ENCODE measurements at regions of chr6 and their contacts with region 1.

Region 1: DNA sequence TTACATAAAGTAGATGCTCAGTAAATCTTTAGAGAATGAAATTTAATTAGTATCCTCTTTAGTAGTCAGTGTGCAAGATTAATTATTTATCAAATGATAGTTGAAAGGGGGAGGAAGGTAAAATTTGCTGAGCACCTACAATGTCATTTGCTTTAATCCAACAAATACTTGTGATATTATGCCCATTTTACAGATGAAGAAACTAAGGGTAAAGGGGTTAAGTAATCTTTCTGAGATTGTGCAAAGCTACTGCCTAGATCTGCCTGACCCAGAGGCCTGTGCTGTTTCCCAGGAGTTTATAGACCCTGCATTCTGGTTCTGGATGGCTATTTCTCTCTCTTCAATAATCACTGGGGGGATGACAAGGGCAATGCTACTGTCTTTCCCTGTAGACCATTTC is 58.3 kb upstream of the BACH2 start:
- DNase-seq: no peak

Region 2: DNA sequence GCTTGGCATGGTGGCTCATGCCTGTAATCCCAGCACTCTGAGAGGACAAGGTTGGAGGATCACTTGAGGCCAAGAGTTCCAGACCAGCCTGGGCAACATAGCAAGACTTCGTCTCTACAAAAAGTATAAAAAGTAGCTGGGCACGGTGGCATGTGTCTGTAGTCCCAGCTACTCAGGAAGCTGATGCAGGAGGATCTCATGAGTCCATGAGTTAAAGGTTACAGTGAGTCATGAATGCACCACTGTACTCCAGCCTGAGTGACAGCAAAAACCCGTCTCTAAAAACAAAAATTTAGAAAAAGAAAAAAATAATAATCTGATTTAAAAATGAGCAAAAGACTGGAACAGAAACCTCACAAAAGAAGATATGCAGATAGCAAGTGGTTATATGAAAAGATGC is 1671.2 kb before region 1 on chr6:
- intact Hi-C with region 1: no loop called
- DNase-seq: no peak

Region 3: GRCh38 chr6:90343581-90343980 is 11.4 kb before region 1 on chr6:
- intact Hi-C with region 1: loop called in 1 of 2 experiments (anchors 1 kb)
- DNase-seq: no peak